ENCODE measurements at regions of chr12 and their contacts with region 1.

Region 1: DNA sequence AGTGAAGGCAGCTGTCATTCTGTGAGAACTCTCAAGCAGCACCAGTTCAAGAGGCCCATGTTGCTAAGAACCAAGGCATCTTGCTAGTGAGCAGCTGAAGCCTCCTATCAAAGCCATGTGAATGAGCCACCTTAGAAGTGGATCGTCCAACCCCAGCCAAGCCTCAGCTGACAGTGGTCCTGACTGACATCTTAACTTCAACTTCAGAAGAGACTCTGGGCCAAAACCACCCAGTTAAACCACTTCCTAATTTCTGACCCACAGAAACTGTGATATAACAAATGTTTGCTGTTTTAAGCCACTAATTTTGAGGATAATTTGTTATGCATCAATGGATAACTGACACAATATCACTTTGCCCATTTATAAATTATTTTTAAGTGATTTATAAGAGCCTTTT is 256.0 kb downstream of the RPAP3 start:
- DNase-seq: no peak
- H3K4me3 ChIP-seq: no peak overlapping the region
- H3K27ac ChIP-seq: no peak overlapping the region
- H3K4me1 ChIP-seq: no peaks in the 10 kb centered on the region
- CTCF ChIP-seq: no peak

Region 2: GRCh38 chr12:47433876-47434275 is 15.9 kb before region 1 on chr12:
- CTCF ChIA-PET with region 1: no interaction called
- POLR2A ChIA-PET with region 1: no interaction called
- intact Hi-C with region 1: no loop called
- DNase-seq: no peak
- H3K4me3 ChIP-seq: no peak overlapping the region
- H3K27ac ChIP-seq: no peak overlapping the region
- H3K4me1 ChIP-seq: no peaks in the 10 kb centered on the region
- CTCF ChIP-seq: no peak

Region 3: GRCh38 chr12:47491516-47492305 is 41.9 kb after region 1 on chr12:
- CTCF ChIA-PET with region 1: interaction called, 11 read pairs
- POLR2A ChIA-PET with region 1: no interaction called
- intact Hi-C with region 1: no loop called
- DNase-seq: no peak
- H3K4me3 ChIP-seq: no peak overlapping the region
- H3K27ac ChIP-seq: no peak overlapping the region
- H3K4me1 ChIP-seq: no peaks in the 10 kb centered on the region
- CTCF ChIP-seq: no peak

Region 4: DNA sequence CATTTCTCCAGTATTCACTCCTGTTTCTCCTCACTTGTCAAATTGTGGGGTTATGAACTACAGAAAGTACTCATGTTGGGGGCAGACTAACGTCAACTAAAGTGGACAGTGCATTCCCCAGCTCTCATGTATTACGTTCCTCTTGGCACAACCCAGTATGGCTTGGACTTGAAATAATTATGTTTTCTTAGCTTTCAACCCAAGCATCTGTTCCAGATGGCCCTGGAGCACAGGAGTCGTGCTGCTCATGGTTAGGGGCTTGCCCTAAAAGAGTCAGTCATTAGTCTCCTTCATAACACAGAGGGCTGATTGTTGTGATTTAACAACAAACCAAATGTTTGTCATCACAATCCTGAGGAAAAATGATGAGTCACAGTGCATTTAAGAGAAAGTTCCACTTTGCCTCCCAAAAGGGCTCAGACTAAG is 101.6 kb after region 1 on chr12:
- CTCF ChIA-PET with region 1: no interaction called
- POLR2A ChIA-PET with region 1: no interaction called
- intact Hi-C with region 1: no loop called
- DNase-seq: no peak
- H3K4me3 ChIP-seq: no peak overlapping the region
- H3K27ac ChIP-seq: no peak overlapping the region
- H3K4me1 ChIP-seq: no peaks in the 10 kb centered on the region
- CTCF ChIP-seq: no peak

Region 5: GRCh38 chr12:49130151-49131050 is 1680.6 kb after region 1 on chr12:
- CTCF ChIA-PET with region 1: no interaction called
- POLR2A ChIA-PET with region 1: no interaction called
- intact Hi-C with region 1: no loop called
- DNase-seq: peak; percentile 97
- H3K4me3 ChIP-seq: peak overlapping the region; percentile 90
- H3K27ac ChIP-seq: peak overlapping the region; percentile 95
- H3K4me1 ChIP-seq: peaks cover 22% of the 10 kb centered on the region
- CTCF ChIP-seq: peak; percentile 92